ENCODE measurements at regions of chr14 and their contacts with region 1.

Region 1: GRCh38 chr14:31084385-31084784 is 58.2 kb upstream of the STRN3 start:
- DNase-seq: no peak
- H3K4me3 ChIP-seq: no peak overlapping the region
- H3K27ac ChIP-seq: no peak overlapping the region
- H3K4me1 ChIP-seq: no peaks in the 10 kb centered on the region
- H3K27me3 ChIP-seq: no peaks in the 10 kb centered on the region
- CTCF ChIP-seq: no peak
- EP300 ChIP-seq: no peak
- POLR2A ChIP-seq: no peak

Region 2: DNA sequence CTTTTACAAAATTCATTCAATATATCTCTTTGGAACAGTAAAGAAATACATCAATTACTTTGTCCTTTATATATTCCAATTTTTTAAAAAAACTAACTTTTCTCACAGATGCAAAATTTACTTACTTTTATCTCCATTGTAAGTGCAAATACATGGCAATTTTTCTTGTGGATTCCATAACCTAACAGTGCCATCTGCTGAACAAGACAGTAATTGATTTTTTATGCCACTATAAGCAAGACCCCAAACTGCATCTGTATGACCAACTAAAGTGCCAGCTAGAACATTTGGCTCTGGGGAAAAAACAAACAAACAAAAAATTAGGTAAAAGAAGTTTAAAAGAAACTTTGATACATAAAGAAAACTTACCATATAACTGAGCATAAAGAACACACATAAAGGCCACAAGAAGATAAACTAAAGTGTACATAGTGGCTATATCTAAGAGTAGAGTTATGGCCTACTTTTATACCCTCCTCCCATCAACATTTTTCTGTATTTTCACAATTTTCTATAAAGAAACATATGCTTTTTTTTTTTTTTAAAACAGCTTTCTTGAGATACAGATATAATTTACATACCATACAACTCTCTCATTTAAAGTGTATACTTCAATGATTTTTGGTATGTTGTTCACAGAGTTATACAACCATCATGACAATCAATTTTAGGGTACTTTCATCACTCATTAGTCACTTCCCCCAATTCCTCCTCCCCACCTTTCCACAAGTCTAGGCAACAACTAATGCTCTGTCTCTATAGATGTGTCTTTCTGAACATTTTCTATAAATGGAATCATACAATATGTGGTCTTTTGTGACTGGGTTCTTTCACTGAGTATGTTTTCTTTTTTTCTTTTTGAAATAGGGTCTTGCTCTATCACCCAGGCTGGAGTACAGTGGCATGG is 177.4 kb before region 1 on chr14:
- intact Hi-C with region 1: no loop called
- DNase-seq: no peak
- H3K4me3 ChIP-seq: no peak overlapping the region
- H3K27ac ChIP-seq: no peak overlapping the region
- H3K4me1 ChIP-seq: peaks cover 1% of the 10 kb centered on the region
- H3K27me3 ChIP-seq: no peaks in the 10 kb centered on the region
- CTCF ChIP-seq: no peak
- EP300 ChIP-seq: no peak
- POLR2A ChIP-seq: no peak

Region 3: DNA sequence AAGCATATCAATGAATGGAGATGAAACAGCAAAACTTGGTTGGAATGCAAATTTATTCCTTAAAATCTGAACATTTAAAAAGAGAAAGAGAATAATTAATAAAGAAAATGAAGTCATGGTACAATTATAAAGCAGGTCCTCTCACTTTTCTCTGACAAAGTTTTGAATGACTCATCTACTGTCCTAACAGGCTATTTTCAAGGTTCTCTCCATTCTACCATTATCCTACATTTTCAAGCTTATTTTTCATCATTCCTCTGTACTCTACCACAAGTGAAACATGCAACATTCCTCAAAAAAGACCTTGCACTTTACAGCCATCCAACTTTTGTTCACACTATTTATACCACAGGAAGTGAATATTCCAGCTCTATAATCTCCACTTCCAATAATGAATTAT is 95.9 kb before region 1 on chr14:
- intact Hi-C with region 1: loop called (anchors 5 to 10 kb)
- DNase-seq: no peak
- H3K4me3 ChIP-seq: no peak overlapping the region
- H3K27ac ChIP-seq: no peak overlapping the region
- H3K4me1 ChIP-seq: peaks cover 8% of the 10 kb centered on the region
- H3K27me3 ChIP-seq: no peaks in the 10 kb centered on the region
- CTCF ChIP-seq: no peak
- EP300 ChIP-seq: no peak
- POLR2A ChIP-seq: no peak

Measured in ovary (tissue), 10 donors.